ENCODE measurements at regions of chr16 and their contacts with region 1.

Region 1: DNA sequence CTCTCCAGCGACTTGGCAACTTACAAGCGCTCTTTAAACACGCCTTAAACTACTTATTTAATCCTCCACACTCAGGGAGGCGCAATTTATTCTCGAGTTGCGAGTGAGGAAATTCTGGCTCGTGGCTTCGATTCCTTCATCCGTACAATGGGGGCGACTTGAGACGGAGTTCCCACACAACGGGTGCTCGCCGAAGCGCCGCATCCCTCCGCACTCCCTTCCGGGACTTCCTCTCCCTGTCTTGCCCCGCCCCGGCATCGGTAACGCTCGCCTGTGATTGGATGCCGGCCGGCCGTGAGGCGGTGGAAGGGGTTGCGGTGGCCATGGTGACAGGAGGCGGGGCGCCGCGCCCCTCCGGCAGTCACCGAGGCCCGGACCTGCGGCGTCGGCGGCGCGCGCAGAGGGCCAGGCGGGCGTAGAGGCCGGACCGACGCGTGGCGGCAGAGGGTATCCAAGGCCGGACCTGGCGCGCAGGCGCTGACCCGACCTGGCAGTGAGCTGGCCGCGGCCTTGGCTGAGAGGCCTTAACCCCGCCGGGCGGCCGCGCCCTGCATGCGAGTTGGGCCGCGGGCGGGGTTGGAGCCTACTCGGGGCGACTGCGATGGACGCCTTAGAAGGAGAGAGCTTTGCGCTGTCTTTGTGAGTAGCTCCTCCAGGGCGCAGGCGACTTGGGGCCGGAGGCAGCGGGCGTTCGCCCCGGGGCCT is at the start of gene ARL2BP:
- DNase-seq: peak; percentile 99
- H3K4me3 ChIP-seq: peak within 1 kb of the TSS; percentile 29 to 70 (median 59)
- H3K27ac ChIP-seq: peak within 1 kb of the TSS; percentile 82 to 94 (median 89)
- H3K4me1 ChIP-seq: peaks cover 6 to 12% of the 10 kb centered on the region in 2 donors
- H3K27me3 ChIP-seq: no peaks in the 10 kb centered on the region
- CTCF ChIP-seq: no peak
- POLR2A ChIP-seq: peak; percentile 69 to 97
- total RNA-seq, gene ARL2BP: 51.2 to 68.9 (median 60.0) TPM

Region 2: GRCh38 chr16:57185944-57186871 is 58.7 kb before region 1 on chr16 and contains the starts of genes PSME3IP1 and RSPRY1:
- intact Hi-C with region 1: loop called (anchors 10 kb)
- DNase-seq: peak; percentile 98 to 99
- H3K4me3 ChIP-seq: peak within 1 kb of the TSS; percentile 81 to 98 (median 95)
- H3K27ac ChIP-seq: peak within 1 kb of the TSS; percentile 85 to 91 (median 89)
- H3K4me1 ChIP-seq: peaks cover 15 to 25% of the 10 kb centered on the region in 2 donors
- H3K27me3 ChIP-seq: no peaks in the 10 kb centered on the region
- CTCF ChIP-seq: peak in 1 of 6 experiments; percentile 29
- POLR2A ChIP-seq: peak; percentile 39 to 94
- total RNA-seq, gene PSME3IP1: 64.7 to 96.3 (median 78.9) TPM
- total RNA-seq, gene RSPRY1: 42.6 to 59.2 (median 53.9) TPM

Region 3: GRCh38 chr16:57564571-57565270 is 319.8 kb after region 1 on chr16:
- intact Hi-C with region 1: no loop called
- DNase-seq: no peak
- H3K4me3 ChIP-seq: no peak overlapping the region
- H3K27ac ChIP-seq: no peak overlapping the region
- H3K4me1 ChIP-seq: no peaks in the 10 kb centered on the region
- H3K27me3 ChIP-seq: no peaks in the 10 kb centered on the region
- CTCF ChIP-seq: no peak
- POLR2A ChIP-seq: no peak